Activated naive CD4-positive, alpha-beta T cell treated with anti-CD3 and anti-CD28 coated beads for 36 hours (primary cell): ENCODE measurements at regions of chr7 and their contacts with region 1.

Region 1: GRCh38 chr7:85890244-85890811 is 703.5 kb upstream of the SEMA3D start:
- DNase-seq: no peak
- H3K4me3 Mint-ChIP-seq: no peak overlapping the region
- H3K27ac Mint-ChIP-seq: no peak overlapping the region
- H3K4me1 Mint-ChIP-seq: no peaks in the 10 kb centered on the region
- H3K27me3 Mint-ChIP-seq: no peaks in the 10 kb centered on the region

Region 2: GRCh38 chr7:85529197-85529596 is 361.1 kb before region 1 on chr7:
- CTCF ChIA-PET with region 1: no interaction called
- intact Hi-C with region 1: no loop called
- DNase-seq: no peak
- H3K4me3 Mint-ChIP-seq: no peak overlapping the region
- H3K27ac Mint-ChIP-seq: no peak overlapping the region
- H3K4me1 Mint-ChIP-seq: no peaks in the 10 kb centered on the region
- H3K27me3 Mint-ChIP-seq: no peaks in the 10 kb centered on the region

Region 3: DNA sequence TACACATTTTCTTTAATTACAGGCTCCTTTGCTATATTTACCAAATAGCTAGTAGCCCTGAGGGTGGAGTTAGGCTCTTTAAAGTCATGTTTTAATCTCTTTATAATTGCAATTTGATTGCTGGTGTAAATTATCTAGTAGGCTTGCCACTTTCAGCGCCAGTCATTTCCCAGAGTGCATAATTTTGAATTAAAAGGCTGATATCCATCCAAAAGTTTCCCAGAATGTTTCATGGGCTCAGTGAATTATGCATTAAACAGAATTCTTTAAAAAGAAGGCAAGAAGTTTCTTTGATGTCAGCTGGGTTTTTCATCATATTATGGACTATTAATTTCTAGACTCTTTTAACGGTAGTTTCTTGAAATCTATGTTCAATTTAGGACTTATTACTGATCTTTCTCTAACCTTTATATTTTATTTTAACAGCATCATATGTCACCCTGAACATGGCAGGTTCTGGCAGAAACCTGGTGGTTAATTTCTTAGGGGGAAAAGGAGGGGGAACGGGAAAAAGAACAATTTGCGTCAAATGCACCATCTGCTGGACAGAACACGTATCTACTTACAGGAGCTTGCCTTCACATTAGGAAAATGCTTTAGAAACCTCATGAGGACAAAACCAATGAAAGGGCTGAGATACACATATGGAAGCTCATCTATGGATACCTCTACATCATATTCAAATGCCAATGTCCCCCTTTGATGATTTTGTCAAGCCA is 924.5 kb after region 1 on chr7:
- CTCF ChIA-PET with region 1: no interaction called
- intact Hi-C with region 1: loop called (anchors 5 kb)
- DNase-seq: no peak
- H3K4me3 Mint-ChIP-seq: no peak overlapping the region
- H3K27ac Mint-ChIP-seq: no peak overlapping the region
- H3K4me1 Mint-ChIP-seq: no peaks in the 10 kb centered on the region
- H3K27me3 Mint-ChIP-seq: no peaks in the 10 kb centered on the region